ENCODE measurements at regions of chr6 and their contacts with region 1.

Region 1: DNA sequence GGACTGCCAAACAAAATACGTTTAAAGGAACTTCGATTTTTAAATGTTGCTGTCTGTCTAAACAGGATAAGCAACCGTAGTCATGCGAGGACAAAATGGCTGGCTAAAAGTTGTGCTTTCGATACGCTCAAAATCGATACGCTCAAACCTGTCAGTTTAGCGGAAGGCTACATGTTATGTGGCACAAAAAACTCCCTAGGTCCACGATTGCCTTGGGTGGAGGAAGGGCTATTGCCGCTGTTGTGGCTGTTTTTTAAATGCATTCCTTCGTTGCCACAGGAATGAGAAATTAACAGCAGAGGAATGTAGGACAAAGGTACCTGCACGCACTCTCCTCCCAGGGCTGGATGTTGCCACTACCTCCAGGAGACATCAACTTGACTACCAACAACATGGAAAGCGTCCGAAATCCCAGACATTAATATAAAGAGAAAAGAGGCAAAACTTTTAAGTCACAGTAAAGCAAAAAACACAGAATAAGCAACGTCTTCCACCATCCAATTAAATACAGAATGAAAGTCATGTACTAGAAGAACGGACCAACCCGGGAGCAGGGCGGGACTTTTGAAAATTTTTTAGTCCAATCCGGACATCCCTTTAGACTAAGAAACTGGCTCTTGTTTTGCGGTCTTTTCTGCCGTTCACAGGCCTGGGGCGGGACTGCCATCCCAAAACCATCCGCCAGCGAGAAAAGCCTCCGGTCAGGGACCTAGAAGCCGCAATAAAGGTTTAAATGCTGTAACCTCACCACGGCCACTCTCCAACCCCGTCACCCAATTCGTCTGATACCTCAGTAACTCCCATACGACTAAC is 32.2 kb upstream of the HFE start:
- DNase-seq: peak; percentile 95
- H3K4me3 Mint-ChIP-seq: peak overlapping the region; percentile 97
- H3K27ac Mint-ChIP-seq: peak overlapping the region; percentile 100
- H3K4me1 Mint-ChIP-seq: peaks cover 18% of the 10 kb centered on the region
- H3K27me3 Mint-ChIP-seq: peaks cover 11% of the 10 kb centered on the region

Region 2: DNA sequence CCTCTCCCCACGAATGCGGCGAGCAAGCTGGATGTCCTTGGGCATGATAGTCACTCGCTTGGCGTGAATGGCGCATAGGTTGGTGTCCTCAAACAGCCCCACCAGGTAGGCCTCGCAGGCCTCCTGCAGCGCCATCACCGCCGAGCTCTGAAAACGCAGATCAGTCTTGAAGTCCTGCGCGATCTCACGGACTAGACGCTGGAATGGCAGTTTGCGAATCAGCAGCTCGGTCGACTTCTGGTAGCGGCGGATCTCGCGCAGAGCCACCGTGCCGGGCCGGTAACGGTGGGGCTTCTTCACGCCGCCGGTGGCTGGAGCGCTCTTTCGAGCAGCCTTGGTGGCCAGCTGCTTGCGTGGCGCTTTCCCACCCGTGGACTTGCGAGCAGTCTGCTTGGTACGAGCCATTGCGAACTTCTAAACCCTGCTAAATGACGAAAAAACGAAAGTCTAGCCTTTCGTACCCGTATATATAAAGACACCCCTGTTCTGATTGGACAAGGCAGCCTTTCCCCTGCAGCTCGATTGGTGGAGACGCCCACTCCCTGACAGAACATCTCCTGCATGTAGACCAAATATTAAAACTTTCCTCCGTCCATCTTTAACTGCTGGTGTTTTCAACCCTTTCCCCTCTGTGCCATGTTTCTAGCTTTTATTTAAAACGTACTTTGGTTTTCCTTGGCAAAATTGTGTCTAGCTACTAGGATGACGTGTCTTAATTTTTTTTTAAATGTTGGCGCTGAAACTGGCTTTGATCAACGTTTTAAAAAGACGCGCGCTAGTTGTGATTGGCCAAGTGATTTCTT is 142.0 kb after region 1 on chr6:
- CTCF ChIA-PET with region 1: no interaction called
- intact Hi-C with region 1: loop called (anchors 2 kb)
- DNase-seq: peak; percentile 86
- H3K4me3 Mint-ChIP-seq: peak overlapping the region; percentile 96
- H3K27ac Mint-ChIP-seq: peak overlapping the region; percentile 99
- H3K4me1 Mint-ChIP-seq: peaks cover 36% of the 10 kb centered on the region
- H3K27me3 Mint-ChIP-seq: peaks cover 5% of the 10 kb centered on the region

Measured in activated naive CD4-positive, alpha-beta T cell treated with anti-CD3 and anti-CD28 coated beads for 36 hours (primary cell).